ENCODE measurements at regions of chr11 and their contacts with region 1.

Region 1: DNA sequence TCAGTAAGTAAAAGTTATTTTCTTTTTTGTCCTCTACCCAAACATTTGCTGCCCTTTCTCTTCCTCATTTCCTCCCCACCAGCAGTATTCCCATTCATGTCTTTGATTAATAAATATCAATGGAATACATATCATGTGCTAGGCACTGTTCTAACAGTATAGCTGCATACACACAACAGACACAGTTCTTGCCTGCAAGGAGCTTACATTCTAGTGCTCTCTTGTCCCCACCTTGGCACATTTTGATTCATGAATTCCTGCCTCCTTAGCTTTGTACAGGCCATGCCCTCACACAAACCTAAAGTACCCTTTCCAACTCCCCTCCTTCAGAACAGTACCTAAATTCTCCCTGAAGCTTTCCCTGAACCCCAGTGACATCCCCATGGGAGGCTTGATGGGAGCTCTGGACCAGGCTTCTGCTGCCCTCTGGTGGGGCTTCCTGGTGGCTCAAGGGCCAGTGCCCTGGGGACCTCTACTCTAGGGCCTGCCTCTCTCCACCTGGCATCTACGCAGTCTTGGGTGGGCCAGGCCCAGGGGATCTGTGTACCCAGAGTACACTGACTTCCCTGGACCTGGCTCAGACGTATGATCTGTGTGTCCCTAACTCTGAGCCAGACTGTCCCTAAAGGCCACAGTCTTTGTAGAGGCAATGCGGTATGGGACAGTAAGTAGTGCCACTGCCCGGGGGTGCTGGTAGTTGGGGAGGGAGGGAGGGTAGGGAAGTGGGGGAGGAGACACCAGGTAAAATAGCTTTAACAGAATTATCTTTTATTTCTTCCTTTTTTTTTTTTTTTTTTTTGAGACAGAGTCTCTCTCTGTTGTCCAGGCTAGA is 14.1 kb downstream of the RPS13 start:
- DNase-seq: peak; percentile 39
- ATAC-seq: peak; percentile 71
- H3K4me3 Mint-ChIP-seq: no peak overlapping the region
- H3K27ac Mint-ChIP-seq: no peak overlapping the region
- H3K4me1 Mint-ChIP-seq: peaks cover 3% of the 10 kb centered on the region
- H3K27me3 Mint-ChIP-seq: no peaks in the 10 kb centered on the region
- CTCF ChIP-seq: no peak

Region 2: DNA sequence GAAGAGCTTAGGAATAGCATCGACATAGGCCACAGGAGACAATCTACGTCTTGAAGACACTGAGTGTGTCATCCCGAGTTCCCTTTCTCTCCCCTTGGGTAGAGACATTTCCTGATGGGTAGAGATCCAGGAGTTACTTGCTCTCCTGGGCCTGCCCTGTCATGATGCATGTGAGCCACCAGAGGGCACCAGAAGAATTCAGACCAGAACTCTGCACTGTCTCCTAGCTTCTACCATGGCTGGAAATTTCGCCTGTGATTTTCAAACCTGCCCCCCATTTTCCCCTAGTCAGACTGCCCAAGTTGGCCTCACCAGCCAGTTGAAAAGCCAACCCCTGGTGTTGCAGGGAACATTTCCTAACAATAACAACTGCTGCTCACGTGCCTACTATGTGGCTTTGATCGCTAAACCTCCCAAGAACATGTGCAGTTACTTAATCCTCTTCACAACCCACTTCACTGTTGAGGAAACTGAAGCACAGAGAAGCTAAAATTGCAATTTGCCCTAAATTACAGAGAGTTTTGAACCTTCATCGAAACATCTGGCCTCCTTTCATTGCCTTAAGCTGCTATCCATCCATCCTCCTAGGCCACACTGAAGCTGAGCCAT is 277.8 kb before region 1 on chr11:
- CTCF ChIA-PET with region 1: interaction called, 20 read pairs
- POLR2A ChIA-PET with region 1: no interaction called
- intact Hi-C with region 1: loop called (anchors 1 kb)
- DNase-seq: no peak
- ATAC-seq: peak; percentile 85
- H3K4me3 Mint-ChIP-seq: no peak overlapping the region
- H3K27ac Mint-ChIP-seq: no peak overlapping the region
- H3K4me1 Mint-ChIP-seq: no peaks in the 10 kb centered on the region
- H3K27me3 Mint-ChIP-seq: no peaks in the 10 kb centered on the region
- CTCF ChIP-seq: peak; percentile 16

Region 3: GRCh38 chr11:16935518-16936302 is 127.7 kb before region 1 on chr11:
- CTCF ChIA-PET with region 1: interaction called, 18 read pairs
- POLR2A ChIA-PET with region 1: no interaction called
- intact Hi-C with region 1: loop called (anchors 1 kb)
- DNase-seq: no peak
- ATAC-seq: no peak
- H3K4me3 Mint-ChIP-seq: no peak overlapping the region
- H3K27ac Mint-ChIP-seq: no peak overlapping the region
- H3K4me1 Mint-ChIP-seq: peaks cover 1% of the 10 kb centered on the region
- H3K27me3 Mint-ChIP-seq: no peaks in the 10 kb centered on the region
- CTCF ChIP-seq: no peak